ENCODE measurements at regions of chr6 and their contacts with region 1.

Region 1: GRCh38 chr6:90083891-90084290 is 189.6 kb downstream of the GJA10 start:
- DNase-seq: no peak
- H3K27ac ChIP-seq: no peak overlapping the region
- CTCF ChIP-seq: no peak

Region 2: GRCh38 chr6:90795078-90795477 is 711.2 kb after region 1 on chr6:
- CTCF ChIA-PET with region 1: interaction called, 10 read pairs
- POLR2A ChIA-PET with region 1: no interaction called
- DNase-seq: no peak
- H3K27ac ChIP-seq: no peak overlapping the region
- CTCF ChIP-seq: no peak